SK-N-SH (cell line): ENCODE measurements at regions of chr11 and their contacts with region 1.

Region 1: DNA sequence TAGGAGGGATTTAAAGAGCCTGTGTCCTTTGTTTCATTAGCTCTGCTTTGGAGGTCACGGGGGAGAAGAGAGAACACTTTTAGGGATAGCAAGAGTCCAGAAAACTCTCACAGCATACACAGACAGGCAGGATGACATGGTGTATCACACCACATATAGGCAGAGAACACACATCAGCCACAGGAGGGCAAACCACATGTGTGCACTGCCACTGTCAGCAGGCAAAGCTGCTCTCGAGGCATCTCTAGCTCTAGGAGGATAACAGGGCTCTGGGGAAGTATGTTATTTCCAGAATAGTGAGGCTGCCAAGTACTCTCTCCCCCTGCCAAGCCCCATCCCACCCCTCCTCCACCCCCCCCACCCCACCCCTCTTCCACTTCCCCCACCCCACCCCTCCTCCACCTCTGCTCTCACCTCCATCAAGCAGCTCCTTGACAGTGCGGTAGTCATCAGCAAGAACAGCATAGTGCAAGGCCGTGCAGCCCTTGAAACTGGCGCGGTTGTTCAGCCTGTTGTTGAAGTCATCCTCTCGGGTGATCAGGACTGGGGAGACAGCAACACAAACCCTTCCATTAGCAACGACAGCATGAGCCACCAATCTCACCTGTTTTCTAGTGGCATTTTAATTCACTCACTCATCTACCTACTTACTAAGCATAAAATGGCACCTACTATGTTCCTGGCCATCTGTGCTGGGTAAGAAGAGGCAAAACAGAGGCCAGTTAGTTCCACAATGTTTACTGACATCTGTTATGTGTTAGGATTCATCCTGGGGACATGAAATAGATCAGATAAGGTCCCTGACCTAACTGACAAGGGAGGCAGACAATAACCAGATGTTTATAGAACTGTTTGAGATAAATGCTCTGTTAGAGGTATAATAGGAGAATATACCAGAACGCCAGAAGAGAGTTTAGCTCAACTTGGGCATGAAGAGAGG is 75.6 kb downstream of the CLPB start:
- DNase-seq: peak; percentile 74
- H3K4me3 ChIP-seq: peak overlapping the region; percentile 38 to 44; a peak in 3 of 4 replicates
- H3K27ac ChIP-seq: peak overlapping the region; percentile 76 to 100
- H3K4me1 ChIP-seq: peaks cover 21 to 71% of the 10 kb centered on the region in 2 experiments; a peak in 3 of 4 replicates
- H3K27me3 ChIP-seq: no peaks in the 10 kb centered on the region
- CTCF ChIP-seq: no peak
- EP300 ChIP-seq: peak; percentile 98 to 100
- RAD21 ChIP-seq: peak; percentile 59

Region 2: DNA sequence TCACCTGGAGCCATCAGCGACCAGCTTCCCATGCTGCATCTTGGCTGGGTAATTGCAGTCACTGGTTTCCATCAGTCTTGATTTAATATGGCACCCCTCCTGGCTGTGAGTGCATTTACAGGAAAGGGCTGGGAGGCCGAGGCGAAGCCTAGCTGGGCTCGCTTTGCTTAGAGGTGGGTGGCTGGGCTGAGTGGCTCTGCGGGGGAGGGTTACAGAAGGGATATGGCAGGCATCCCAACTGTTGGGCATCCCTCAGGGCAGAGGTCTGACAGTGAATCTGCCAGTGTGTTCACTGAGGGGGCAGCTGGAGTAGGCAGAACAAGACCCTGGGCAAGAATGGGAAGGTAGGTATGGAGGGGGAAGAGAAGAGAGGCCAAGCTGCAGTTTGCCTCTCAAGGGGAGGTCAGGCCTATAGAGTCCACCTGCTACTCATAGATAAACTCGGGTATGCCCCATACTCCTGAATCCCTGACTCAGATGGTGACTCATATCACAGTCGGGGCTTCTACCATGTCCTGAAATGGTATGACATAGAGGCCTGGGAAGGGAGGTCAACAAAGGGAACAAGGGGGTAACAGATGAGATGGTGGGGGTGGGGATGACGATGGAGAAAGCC is 37.2 kb before region 1 on chr11:
- CTCF ChIA-PET with region 1: interaction called, 637 read pairs
- POLR2A ChIA-PET with region 1: interaction called, 96 read pairs
- DNase-seq: peak; percentile 78
- H3K4me3 ChIP-seq: no peak overlapping the region
- H3K27ac ChIP-seq: peak overlapping the region; percentile 75 to 100
- H3K4me1 ChIP-seq: peaks cover 34 to 72% of the 10 kb centered on the region in 2 experiments
- H3K27me3 ChIP-seq: no peaks in the 10 kb centered on the region
- CTCF ChIP-seq: no peak
- EP300 ChIP-seq: peak; percentile 95 to 100
- RAD21 ChIP-seq: peak; percentile 44; the same call in 1 of the 2 replicates

Region 3: DNA sequence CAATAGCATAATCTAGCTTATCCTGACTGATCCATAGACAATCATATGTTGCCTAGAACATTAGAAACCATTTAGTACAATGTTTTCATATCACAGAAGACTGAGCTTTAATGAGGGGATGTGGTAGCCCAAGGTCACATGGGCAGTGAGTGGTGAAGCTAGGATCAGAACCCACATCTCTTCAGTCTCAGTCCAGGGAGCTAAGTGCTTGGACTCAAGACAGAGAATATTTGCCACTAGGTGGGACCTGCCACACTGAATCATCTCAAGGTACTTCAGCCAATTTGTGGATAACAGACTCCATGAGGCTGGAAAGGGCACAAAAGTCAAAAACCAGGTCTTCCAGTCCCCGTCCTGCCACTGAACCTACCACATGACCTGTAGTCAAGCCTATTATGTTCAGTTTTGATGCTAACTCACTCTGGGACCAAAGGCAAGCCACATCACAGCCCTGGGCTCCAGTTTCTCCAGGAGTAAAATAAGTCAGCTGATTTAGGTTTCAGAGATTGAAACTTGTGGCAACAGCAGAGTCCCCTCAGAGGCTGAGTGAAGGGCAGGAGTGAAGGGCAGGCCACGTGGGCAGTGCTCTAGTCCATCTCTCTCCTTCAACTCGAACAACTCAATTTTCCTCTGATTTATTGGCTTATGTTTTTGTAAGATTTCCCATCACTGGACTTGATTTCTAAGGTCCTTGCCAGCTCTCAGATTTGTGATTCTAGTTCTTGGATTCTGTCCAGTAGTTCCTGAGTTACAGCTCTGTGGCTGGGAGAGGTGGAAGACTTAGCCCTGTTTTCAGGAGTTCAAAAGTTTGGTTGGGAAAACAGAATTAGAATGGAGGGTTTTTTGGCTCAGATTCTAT is 30.1 kb before region 1 on chr11:
- CTCF ChIA-PET with region 1: interaction called, 637 read pairs
- POLR2A ChIA-PET with region 1: interaction called, 22 read pairs
- DNase-seq: no peak
- H3K4me3 ChIP-seq: no peak overlapping the region
- H3K27ac ChIP-seq: peak overlapping the region; percentile 87 to 100
- H3K4me1 ChIP-seq: peaks cover 62 to 71% of the 10 kb centered on the region in 2 experiments
- H3K27me3 ChIP-seq: no peaks in the 10 kb centered on the region
- CTCF ChIP-seq: peak; percentile 51
- EP300 ChIP-seq: peak; percentile 42 to 61; a peak in 3 of 4 replicates
- RAD21 ChIP-seq: peak; percentile 24; the same call in 1 of the 2 replicates

Region 4: GRCh38 chr11:72333661-72334060 is 25.1 kb before region 1 on chr11:
- CTCF ChIA-PET with region 1: interaction called, 637 read pairs
- POLR2A ChIA-PET with region 1: interaction called, 15 read pairs
- DNase-seq: peak; percentile 61
- H3K4me3 ChIP-seq: no peak overlapping the region
- H3K27ac ChIP-seq: peak overlapping the region; percentile 35 to 99; a peak in 3 of 4 replicates
- H3K4me1 ChIP-seq: peaks cover 32 to 75% of the 10 kb centered on the region in 2 experiments
- H3K27me3 ChIP-seq: no peaks in the 10 kb centered on the region
- CTCF ChIP-seq: peak; percentile 52
- EP300 ChIP-seq: peak in 1 of 2 experiments; percentile 59; a peak in 1 of 4 replicates
- RAD21 ChIP-seq: peak; percentile 73

Region 5: GRCh38 chr11:72338741-72339140 is 20.0 kb before region 1 on chr11:
- CTCF ChIA-PET with region 1: interaction called, 637 read pairs
- POLR2A ChIA-PET with region 1: interaction called, 15 read pairs
- DNase-seq: no peak
- H3K4me3 ChIP-seq: no peak overlapping the region
- H3K27ac ChIP-seq: peak overlapping the region; percentile 15 to 99; a peak in 3 of 4 replicates
- H3K4me1 ChIP-seq: peaks cover 18 to 84% of the 10 kb centered on the region in 2 experiments; a peak in 3 of 4 replicates
- H3K27me3 ChIP-seq: no peaks in the 10 kb centered on the region
- CTCF ChIP-seq: no peak
- EP300 ChIP-seq: peak in 1 of 2 experiments; percentile 66; a peak in 1 of 4 replicates
- RAD21 ChIP-seq: no peak

Region 6: GRCh38 chr11:72373163-72373562 is 14.4 kb after region 1 on chr11:
- CTCF ChIA-PET with region 1: interaction called, 10 read pairs
- POLR2A ChIA-PET with region 1: interaction called, 64 read pairs
- DNase-seq: no peak
- H3K4me3 ChIP-seq: no peak overlapping the region
- H3K27ac ChIP-seq: peak overlapping the region in 1 of 2 experiments; percentile 99; a peak in 2 of 4 replicates
- H3K4me1 ChIP-seq: peaks cover 20 to 44% of the 10 kb centered on the region in 2 experiments
- H3K27me3 ChIP-seq: no peaks in the 10 kb centered on the region
- CTCF ChIP-seq: no peak
- EP300 ChIP-seq: 0 out of 4 replicates have a peak, but pooled peaks of 1 of the 2 experiments have one; percentile 13
- RAD21 ChIP-seq: no peak

Region 7: GRCh38 chr11:72454791-72455190 is 96.1 kb after region 1 on chr11:
- CTCF ChIA-PET with region 1: no interaction called
- POLR2A ChIA-PET with region 1: no interaction called
- DNase-seq: no peak
- H3K4me3 ChIP-seq: no peak overlapping the region
- H3K27ac ChIP-seq: no peak overlapping the region
- H3K4me1 ChIP-seq: no peaks in the 10 kb centered on the region
- H3K27me3 ChIP-seq: peaks cover 6% of the 10 kb centered on the region; the same call in 1 of the 2 replicates
- CTCF ChIP-seq: peak; percentile 19; the same call in 1 of the 2 replicates
- EP300 ChIP-seq: no peak
- RAD21 ChIP-seq: no peak